Naive thymus-derived CD4-positive, alpha-beta T cell (primary cell): ENCODE measurements at regions of chr5 and their contacts with region 1.

Region 1: GRCh38 chr5:10563945-10564837 is at the start of gene ANKRD33B:
- DNase-seq: peak; percentile 44 to 85 (median 66)
- ATAC-seq: peak; percentile 91
- H3K4me3 ChIP-seq: peak within 1 kb of the TSS; percentile 56
- H3K4me3 Mint-ChIP-seq: peak within 1 kb of the TSS; percentile 67 to 95 (median 85)
- H3K27ac ChIP-seq: peak within 1 kb of the TSS; percentile 72
- H3K27ac Mint-ChIP-seq: peak within 1 kb of the TSS in 2 of 9 donors; percentile 57 to 86
- H3K4me1 ChIP-seq: peaks cover 0 to 13% of the 10 kb centered on the region in 2 donors
- H3K4me1 Mint-ChIP-seq: peaks cover 6 to 28% (median 17%) of the 10 kb centered on the region in 7 donors
- H3K27me3 ChIP-seq: no peaks in the 10 kb centered on the region
- H3K27me3 Mint-ChIP-seq: peaks cover 0 to 30% (median 0%) of the 10 kb centered on the region in 5 donors
- total RNA-seq, gene ANKRD33B: 0.30 to 10.1 (median 1.0) TPM

Region 2: GRCh38 chr5:10249948-10250803 is 314.0 kb before region 1 on chr5 and contains the start of gene CCT5:
- CTCF ChIA-PET with region 1: no interaction called
- POLR2A ChIA-PET with region 1: no interaction called
- intact Hi-C with region 1: loop called (anchors 1 to 2 kb)
- DNase-seq: peak; percentile 83 to 97 (median 95)
- ATAC-seq: peak; percentile 91
- H3K4me3 ChIP-seq: peak within 1 kb of the TSS; percentile 97
- H3K4me3 Mint-ChIP-seq: peak within 1 kb of the TSS; percentile 83 to 99 (median 95)
- H3K27ac ChIP-seq: peak within 1 kb of the TSS; percentile 89
- H3K27ac Mint-ChIP-seq: peak within 1 kb of the TSS; percentile 96 to 100 (median 99)
- H3K4me1 ChIP-seq: peaks cover 12 to 32% of the 10 kb centered on the region in 2 donors
- H3K4me1 Mint-ChIP-seq: peaks cover 47 to 66% (median 53%) of the 10 kb centered on the region in 7 donors
- H3K27me3 ChIP-seq: no peaks in the 10 kb centered on the region
- H3K27me3 Mint-ChIP-seq: peaks cover 0 to 5% (median 0%) of the 10 kb centered on the region in 5 donors
- total RNA-seq, gene CCT5: 58.0 to 265 (median 81.9) TPM

Region 3: DNA sequence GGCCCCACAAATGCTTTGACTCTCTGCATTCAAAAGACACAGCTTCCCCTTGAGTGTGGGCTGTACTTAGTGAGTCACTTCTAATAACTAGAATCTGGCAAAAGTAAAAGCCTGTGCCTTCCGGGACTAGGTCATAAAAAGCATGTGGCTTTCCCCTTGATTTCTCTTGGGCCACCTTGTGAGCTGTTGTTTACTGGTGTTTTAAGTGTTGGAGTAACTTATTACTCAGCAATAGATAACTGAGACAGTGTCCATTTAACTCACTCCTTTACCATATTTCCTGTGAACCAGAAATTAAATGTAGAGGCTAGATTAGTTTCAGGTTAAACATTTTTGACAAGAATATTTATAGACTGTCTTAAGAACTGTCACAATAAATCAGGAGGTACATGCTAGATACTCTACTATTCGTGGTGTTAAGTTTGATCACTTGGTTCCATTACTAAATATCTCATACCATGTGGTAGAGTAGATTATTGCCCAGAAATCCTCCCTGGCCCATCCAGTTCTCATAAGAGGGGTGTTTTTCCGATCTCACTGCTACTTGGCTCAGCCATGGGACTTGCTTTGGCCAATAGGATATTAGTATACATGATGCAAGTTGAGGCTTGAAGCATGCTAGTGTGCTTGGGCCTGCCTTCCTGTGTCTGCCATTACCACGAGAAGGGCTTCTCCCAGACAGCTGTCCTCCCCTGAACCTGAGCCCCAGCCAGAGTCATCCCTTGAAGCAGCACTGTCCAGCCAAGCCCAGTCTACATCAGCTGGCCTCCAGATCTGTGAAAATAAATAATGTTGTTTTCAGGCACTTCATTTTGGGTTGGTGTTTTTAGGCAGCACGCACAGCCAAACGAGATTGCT is 246.1 kb before region 1 on chr5:
- CTCF ChIA-PET with region 1: no interaction called
- POLR2A ChIA-PET with region 1: no interaction called
- intact Hi-C with region 1: no loop called
- DNase-seq: no peak
- ATAC-seq: no peak
- H3K4me3 ChIP-seq: no peak overlapping the region
- H3K4me3 Mint-ChIP-seq: no peak overlapping the region
- H3K27ac ChIP-seq: no peak overlapping the region
- H3K27ac Mint-ChIP-seq: peak overlapping the region in 1 of 9 donors; percentile 4
- H3K4me1 ChIP-seq: no peaks in the 10 kb centered on the region
- H3K4me1 Mint-ChIP-seq: peaks cover 0 to 2% (median 0%) of the 10 kb centered on the region in 7 donors
- H3K27me3 ChIP-seq: no peaks in the 10 kb centered on the region
- H3K27me3 Mint-ChIP-seq: peaks cover 0 to 7% (median 0%) of the 10 kb centered on the region in 5 donors

Region 4: GRCh38 chr5:10505517-10506095 is 58.6 kb before region 1 on chr5:
- CTCF ChIA-PET with region 1: no interaction called
- POLR2A ChIA-PET with region 1: no interaction called
- intact Hi-C with region 1: no loop called
- DNase-seq: no peak
- ATAC-seq: peak; percentile 78
- H3K4me3 ChIP-seq: no peak overlapping the region
- H3K4me3 Mint-ChIP-seq: no peak overlapping the region
- H3K27ac ChIP-seq: no peak overlapping the region
- H3K27ac Mint-ChIP-seq: no peak overlapping the region
- H3K4me1 ChIP-seq: no peaks in the 10 kb centered on the region
- H3K4me1 Mint-ChIP-seq: peaks cover 0 to 1% (median 0%) of the 10 kb centered on the region in 7 donors
- H3K27me3 ChIP-seq: no peaks in the 10 kb centered on the region
- H3K27me3 Mint-ChIP-seq: no peaks in the 10 kb centered on the region

Region 5: DNA sequence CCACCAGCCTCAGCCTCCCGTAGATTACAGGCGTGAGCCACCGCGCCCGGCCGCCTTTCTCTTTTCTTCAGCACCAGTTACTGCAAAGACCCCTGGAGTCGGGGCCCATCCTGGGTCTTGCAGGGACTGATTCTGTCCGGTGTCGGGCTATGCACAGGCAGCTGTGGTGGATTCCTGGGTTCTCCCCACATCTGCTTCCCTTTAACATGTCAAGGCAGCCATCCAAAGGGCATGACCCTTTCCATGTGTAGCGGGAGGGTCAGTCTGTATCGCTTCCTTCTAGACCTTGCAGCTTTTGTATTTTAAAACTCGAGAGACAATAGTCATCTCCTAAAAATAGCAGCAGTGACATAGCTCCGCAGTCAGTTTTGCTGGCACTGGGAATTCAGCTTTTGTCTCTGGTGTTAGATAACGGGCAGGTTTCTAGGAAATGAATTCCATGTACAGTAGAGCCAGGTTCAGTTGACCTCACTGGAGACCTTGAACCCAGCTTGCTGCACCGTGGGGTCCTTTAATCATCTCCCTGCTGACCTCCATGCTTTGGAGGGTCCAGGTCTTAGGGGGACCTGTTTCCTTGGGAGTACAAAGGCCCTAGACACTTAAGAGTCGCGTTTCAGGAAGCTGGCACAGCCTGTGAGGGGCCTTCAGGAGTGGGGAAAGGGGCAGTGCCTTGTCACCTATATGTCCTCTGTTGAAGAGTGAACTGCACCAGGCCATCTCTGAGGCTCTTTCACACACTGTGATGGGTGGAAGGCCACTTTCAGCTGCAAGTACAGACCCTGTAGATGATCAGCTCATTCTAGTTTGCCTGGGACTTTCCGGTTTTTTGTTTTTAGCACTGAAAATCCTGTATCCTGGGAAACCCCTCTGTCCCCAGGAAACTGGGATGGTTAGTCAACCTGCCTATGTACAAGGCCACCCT is 13.4 kb after region 1 on chr5:
- CTCF ChIA-PET with region 1: no interaction called
- POLR2A ChIA-PET with region 1: no interaction called
- intact Hi-C with region 1: loop called in 1 of 2 experiments (anchors 2 kb)
- DNase-seq: peak in 1 of 9 donors; percentile 19
- ATAC-seq: peak; percentile 35
- H3K4me3 ChIP-seq: no peak overlapping the region
- H3K4me3 Mint-ChIP-seq: peak overlapping the region in 1 of 10 donors; percentile 33
- H3K27ac ChIP-seq: no peak overlapping the region
- H3K27ac Mint-ChIP-seq: no peak overlapping the region
- H3K4me1 ChIP-seq: no peaks in the 10 kb centered on the region
- H3K4me1 Mint-ChIP-seq: peaks cover 0 to 43% (median 27%) of the 10 kb centered on the region in 7 donors
- H3K27me3 ChIP-seq: no peaks in the 10 kb centered on the region
- H3K27me3 Mint-ChIP-seq: no peaks in the 10 kb centered on the region

Region 6: DNA sequence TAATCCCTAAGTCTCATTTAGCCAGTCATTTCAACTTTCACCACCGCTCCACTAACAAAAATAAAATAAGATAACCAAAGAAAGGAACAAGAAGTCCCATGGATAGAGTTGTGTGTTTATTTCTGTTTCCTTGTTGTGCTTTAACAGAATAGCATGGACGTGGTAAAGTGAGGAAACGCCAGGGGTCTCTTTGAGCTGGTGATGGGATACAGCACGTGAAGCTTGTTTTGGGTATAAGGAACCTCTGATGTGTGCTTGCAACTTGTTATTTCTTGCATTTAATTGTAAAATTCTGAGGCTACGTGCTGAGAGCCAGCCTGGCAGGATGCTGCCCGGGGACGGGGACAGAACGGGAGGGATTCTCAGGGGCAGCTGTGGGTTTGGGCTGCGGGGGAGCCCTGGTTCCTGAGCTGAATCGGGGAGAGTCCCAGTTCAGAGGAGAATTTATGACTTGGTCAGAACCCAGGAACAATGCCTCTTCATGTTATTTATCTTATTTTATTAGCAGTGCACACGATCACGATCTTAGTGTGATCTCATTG is 63.0 kb after region 1 on chr5:
- CTCF ChIA-PET with region 1: no interaction called
- POLR2A ChIA-PET with region 1: no interaction called
- intact Hi-C with region 1: loop called (anchors 1 to 5 kb)
- DNase-seq: peak in 1 of 9 donors; percentile 8
- ATAC-seq: peak; percentile 1
- H3K4me3 ChIP-seq: peak overlapping the region; percentile 59
- H3K4me3 Mint-ChIP-seq: peak overlapping the region; percentile 78 to 95 (median 86)
- H3K27ac ChIP-seq: no peak overlapping the region
- H3K27ac Mint-ChIP-seq: peak overlapping the region; percentile 8 to 72 (median 49)
- H3K4me1 ChIP-seq: peaks cover 0 to 8% of the 10 kb centered on the region in 2 donors
- H3K4me1 Mint-ChIP-seq: peaks cover 13 to 43% (median 17%) of the 10 kb centered on the region in 7 donors
- H3K27me3 ChIP-seq: no peaks in the 10 kb centered on the region
- H3K27me3 Mint-ChIP-seq: peaks cover 0 to 7% (median 0%) of the 10 kb centered on the region in 5 donors